ENCODE measurements at regions of chr10 and their contacts with region 1.

Region 1: GRCh38 chr10:93095225-93095624 is 21.5 kb downstream of the CYP26A1 start:
- DNase-seq: no peak
- ATAC-seq: no peak
- H3K4me3 ChIP-seq: no peak overlapping the region
- H3K4me3 Mint-ChIP-seq: no peak overlapping the region
- H3K27ac ChIP-seq: no peak overlapping the region
- H3K27ac Mint-ChIP-seq: no peak overlapping the region
- H3K4me1 ChIP-seq: no peaks in the 10 kb centered on the region
- H3K4me1 Mint-ChIP-seq: no peaks in the 10 kb centered on the region
- H3K27me3 ChIP-seq: no peaks in the 10 kb centered on the region
- H3K27me3 Mint-ChIP-seq: peaks cover 2 to 9% of the 10 kb centered on the region in 2 donors

Region 2: GRCh38 chr10:93023013-93023650 is 72.1 kb before region 1 on chr10:
- CTCF ChIA-PET with region 1: interaction called in 1 of 2 experiments, 10 read pairs
- POLR2A ChIA-PET with region 1: no interaction called
- DNase-seq: no peak
- ATAC-seq: no peak
- H3K4me3 ChIP-seq: no peak overlapping the region
- H3K4me3 Mint-ChIP-seq: no peak overlapping the region
- H3K27ac ChIP-seq: no peak overlapping the region
- H3K27ac Mint-ChIP-seq: no peak overlapping the region
- H3K4me1 ChIP-seq: no peaks in the 10 kb centered on the region
- H3K4me1 Mint-ChIP-seq: no peaks in the 10 kb centered on the region
- H3K27me3 ChIP-seq: no peaks in the 10 kb centered on the region
- H3K27me3 Mint-ChIP-seq: no peaks in the 10 kb centered on the region